Testis (tissue), 5 donors: ENCODE measurements at regions of chr3 and their contacts with region 1.

Region 1: GRCh38 chr3:118884748-118885206 is 149.9 kb downstream of the IGSF11 start:
- DNase-seq: peak; percentile 87
- H3K4me3 ChIP-seq: no peak overlapping the region
- H3K27ac ChIP-seq: no peak overlapping the region
- H3K4me1 ChIP-seq: no peaks in the 10 kb centered on the region
- H3K27me3 ChIP-seq: no peaks in the 10 kb centered on the region
- CTCF ChIP-seq: peak; percentile 65 to 83 (median 81)
- POLR2A ChIP-seq: no peak

Region 2: GRCh38 chr3:118557513-118558257 is 327.1 kb before region 1 on chr3:
- intact Hi-C with region 1: no loop called
- DNase-seq: no peak
- H3K4me3 ChIP-seq: no peak overlapping the region
- H3K27ac ChIP-seq: no peak overlapping the region
- H3K4me1 ChIP-seq: no peaks in the 10 kb centered on the region
- H3K27me3 ChIP-seq: no peaks in the 10 kb centered on the region
- CTCF ChIP-seq: no peak
- POLR2A ChIP-seq: no peak

Region 3: DNA sequence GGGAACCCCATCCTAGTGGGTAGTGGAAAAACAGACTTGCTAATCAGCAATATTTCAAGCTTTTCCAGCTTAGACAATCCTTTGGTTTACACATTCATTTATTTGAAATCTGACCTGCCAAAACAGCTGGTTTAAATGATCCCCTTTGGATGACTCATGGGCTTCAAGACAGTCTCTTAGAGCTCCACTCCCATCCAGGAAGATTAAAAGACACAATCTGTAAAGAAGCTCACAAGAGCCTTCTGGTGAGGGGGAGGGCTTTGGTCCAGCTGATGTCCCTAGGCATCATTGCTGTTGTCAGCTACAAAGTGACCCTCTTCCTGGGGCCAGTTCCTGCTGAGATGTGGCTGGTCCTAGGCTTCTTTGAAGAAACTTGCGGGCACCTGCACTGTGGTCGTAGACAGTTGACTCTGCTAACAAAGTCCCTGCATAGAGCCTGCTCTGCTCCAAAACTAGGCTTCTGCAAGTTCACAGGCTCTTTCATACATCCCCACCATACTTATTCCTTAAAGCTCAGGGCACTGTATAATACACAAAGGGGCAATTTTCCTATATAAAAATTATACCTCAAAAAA is 76.2 kb after region 1 on chr3:
- intact Hi-C with region 1: no loop called
- DNase-seq: no peak
- H3K4me3 ChIP-seq: no peak overlapping the region
- H3K27ac ChIP-seq: no peak overlapping the region
- H3K4me1 ChIP-seq: no peaks in the 10 kb centered on the region
- H3K27me3 ChIP-seq: no peaks in the 10 kb centered on the region
- CTCF ChIP-seq: no peak
- POLR2A ChIP-seq: no peak

Region 4: DNA sequence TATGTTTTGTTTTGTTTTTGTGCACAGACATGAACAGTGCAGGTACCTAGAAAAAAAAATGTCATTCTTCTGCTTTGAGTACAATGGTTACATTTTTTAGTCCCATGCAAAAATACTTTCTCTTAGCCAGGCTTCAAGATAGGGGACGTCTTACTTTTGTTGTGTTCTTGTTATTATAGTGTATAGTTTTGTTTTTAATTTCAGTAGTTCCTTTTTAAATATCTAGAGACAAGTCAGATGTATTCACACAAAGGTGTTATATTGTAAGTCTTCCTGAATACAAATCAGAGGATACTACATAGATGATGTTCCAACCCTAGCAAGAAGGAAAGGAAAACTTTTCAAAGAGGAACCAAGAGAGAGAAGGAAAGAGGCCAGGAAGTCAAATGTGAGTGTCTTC is 178.7 kb after region 1 on chr3:
- intact Hi-C with region 1: no loop called
- DNase-seq: no peak
- H3K4me3 ChIP-seq: no peak overlapping the region
- H3K27ac ChIP-seq: no peak overlapping the region
- H3K4me1 ChIP-seq: no peaks in the 10 kb centered on the region
- H3K27me3 ChIP-seq: no peaks in the 10 kb centered on the region
- CTCF ChIP-seq: no peak
- POLR2A ChIP-seq: no peak

Region 5: DNA sequence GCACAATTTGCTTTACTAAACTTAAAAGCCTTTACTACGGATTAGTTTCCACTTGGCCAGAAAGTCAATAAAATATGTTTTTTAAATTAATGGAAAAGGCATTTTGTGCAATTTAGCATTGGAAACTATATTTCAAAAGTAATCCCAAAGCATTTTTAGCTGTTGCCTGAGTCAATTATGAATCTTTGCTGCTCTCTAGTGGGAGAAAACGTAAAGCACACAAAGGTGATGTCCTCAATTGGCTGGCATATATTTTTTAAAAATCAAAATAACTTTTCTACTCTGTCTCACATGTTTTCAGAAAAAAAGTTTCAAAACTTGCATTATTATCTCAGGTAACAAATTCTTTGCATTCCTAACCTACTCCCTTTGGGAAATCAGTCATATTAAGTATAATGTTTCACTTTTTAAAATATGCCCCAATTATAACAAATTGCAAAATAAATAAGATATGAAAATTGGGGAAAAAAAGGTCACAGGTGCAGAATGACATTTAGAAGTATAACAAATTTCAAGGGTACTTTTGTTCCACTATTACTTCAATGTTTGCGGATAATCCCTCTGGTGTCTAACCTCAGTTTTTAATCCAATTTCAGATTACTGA is 213.9 kb after region 1 on chr3:
- intact Hi-C with region 1: loop called (anchors 5 kb)
- DNase-seq: no peak
- H3K4me3 ChIP-seq: no peak overlapping the region
- H3K27ac ChIP-seq: no peak overlapping the region
- H3K4me1 ChIP-seq: no peaks in the 10 kb centered on the region
- H3K27me3 ChIP-seq: no peaks in the 10 kb centered on the region
- CTCF ChIP-seq: peak; percentile 64 to 74 (median 69)
- POLR2A ChIP-seq: no peak